ENCODE measurements at regions of chr9 and their contacts with region 1.

Region 1: DNA sequence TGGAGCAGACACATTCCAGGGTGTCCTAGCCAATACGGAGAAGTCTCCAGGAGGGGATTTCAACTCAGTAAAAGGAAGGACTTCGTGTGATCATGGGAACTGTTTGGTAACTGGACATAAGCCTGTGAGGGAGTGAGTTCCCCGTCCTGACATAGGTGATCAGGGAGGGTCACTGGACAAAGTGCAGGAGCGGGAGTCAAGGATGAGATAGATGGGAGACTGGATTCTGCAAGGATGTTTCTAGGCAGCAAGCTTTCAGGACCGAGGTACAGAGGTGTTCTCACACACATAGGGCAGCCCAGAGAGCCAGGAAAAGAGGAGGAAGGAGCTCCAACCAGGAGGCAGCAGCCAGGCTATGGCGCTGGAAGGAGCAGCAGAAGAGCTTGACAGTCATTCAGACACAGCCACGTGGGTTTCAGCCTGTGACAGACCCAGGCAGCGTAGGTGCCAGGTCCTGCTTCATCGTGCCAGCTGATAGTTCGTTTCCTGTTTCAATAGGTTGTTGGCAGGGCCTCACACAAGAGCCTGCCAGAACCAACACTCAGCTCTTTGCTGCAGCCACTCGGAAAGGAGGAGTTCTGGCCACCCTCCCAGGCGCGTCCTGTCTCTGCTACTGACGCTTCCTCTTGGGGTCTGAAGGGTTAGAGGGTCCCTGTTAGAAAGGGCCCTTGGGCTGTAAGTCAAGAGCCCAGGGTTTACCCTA is 84.1 kb downstream of the AMBP start:
- DNase-seq: peak; percentile 89

Region 2: DNA sequence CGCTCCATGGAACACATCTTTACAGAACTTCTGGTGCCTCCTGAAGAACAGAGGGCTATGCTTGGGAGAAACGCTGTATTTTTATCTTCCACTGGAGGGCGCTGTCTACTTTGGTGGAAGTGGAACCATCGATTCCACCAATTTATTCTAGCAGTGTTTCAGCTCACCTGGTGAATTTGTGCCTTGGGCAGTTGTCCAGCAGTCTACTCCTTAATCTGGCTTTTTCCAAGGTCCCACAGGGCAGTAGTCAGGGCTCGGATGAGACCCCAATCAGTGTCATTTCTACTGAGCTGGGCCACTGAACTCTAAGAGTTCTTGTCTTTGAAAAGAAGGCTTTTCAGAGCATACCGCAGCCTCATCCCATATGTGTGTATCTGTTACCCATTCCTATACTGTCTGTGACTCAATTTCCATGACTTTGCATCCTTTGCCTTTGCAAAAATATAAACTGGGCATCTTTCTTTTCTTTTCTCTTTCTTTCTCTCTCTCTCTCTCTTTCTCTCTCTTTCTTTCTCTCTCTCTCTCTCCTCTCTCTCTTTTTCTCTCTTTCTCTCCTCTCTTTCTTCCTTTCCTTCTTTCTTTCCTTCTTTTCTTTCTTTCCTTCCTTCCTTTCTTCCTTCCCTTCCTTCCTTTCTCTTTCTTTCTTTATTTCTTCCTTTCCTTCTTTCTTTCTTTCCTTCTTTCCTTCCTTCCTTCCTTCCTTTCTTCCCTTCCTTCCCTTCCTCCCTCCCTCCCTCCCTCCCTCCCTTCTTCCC is 256.3 kb before region 1 on chr9:
- intact Hi-C with region 1: no loop called
- DNase-seq: no peak

Region 3: GRCh38 chr9:114004221-114004716 is 10.3 kb after region 1 on chr9:
- intact Hi-C with region 1: loop called (anchors 1 kb)
- DNase-seq: peak; percentile 85

Region 4: DNA sequence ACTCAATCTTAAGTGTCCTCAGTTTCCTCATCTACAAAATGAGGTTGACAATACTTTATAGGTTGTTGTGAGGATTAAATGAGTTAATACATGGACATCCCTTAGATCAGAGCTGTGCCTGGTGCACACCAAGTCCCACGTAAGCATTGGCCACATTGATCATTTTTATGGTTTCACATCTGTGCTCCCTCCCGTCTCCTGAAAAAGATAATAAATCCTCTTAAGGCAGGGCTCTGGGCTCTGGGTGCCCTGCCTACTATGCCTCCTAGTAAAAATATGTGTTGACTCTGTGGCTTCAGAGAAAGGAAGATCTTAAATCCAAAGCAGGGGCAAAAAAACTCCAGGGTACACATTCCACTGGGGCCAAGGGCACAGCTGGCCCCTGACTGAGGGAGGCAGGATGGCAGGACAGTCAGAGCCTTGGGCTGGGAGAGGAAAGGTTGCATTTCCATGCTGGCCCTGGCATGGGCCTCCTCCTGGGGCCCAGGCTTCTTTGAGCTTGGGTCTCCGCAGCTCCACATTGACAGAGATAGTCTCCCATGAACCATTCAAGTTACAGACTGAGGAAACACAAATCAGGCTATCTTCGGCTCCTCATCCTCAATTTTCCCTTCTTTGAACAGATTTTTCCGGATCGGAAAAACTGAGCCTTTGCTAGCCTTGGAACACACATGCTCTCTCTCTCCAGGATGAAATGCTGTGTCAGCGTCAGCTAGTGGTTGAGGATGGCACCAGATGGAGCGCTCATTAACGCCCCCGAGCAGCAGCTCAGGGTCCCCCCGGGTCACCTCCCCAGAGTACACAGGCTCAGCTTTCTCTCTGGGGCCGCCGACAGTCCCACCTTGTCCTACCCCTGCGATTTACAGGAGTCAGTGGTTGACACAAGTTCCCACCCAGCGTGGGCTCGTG is 127.5 kb after region 1 on chr9:
- intact Hi-C with region 1: loop called (anchors 5 kb)
- DNase-seq: peak; percentile 70

Measured in cardiac septum (tissue), 1 donor.